ENCODE measurements at regions of chr21 and their contacts with region 1.

Region 1: DNA sequence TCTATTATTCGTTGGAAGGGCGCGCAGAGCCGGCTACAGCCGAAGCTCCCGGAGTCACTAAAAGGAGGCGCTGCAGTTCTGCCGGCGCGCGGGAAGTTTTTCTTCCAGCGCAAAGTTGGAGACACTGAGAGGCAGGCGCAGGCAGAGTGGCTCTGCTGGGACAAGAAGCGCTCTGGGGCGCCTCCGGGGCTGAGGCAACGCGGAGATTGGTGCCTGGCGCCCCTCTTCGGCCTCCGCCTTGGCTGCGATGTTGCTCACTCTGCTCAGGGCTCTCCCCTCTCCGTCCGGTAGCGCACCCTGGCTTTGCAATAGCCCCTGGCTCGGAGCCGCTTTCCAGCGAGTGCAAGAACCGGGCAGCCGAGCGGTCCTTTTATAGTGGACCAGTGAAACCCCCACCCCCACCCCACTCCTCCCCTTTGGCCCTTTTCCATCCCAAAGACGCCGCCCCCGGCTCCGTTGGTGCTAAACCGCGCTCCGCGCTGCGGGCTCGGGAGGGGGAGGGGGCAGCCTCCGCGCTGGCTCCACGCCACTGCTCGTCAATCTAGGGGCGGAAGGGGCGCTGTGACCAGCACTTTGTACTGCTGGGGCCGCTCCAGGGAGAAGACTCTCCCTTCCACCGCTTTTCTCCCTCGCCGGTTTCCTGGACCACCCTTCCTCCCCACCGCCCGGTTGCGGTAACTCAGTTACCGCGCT is at the start of gene ADAMTS1:
- DNase-seq: peak; percentile 42 to 61
- ATAC-seq: peak; percentile 52 to 65 (median 63)
- H3K4me3 ChIP-seq: peak within 1 kb of the TSS; percentile 70
- H3K4me3 Mint-ChIP-seq: peak within 1 kb of the TSS; percentile 91
- H3K27ac ChIP-seq: peak within 1 kb of the TSS; percentile 34
- H3K27ac Mint-ChIP-seq: peak within 1 kb of the TSS; percentile 81 to 91
- H3K4me1 ChIP-seq: peaks cover 38% of the 10 kb centered on the region
- H3K4me1 Mint-ChIP-seq: peaks cover 58 to 71% of the 10 kb centered on the region in 2 donors
- H3K27me3 ChIP-seq: no peaks in the 10 kb centered on the region
- H3K27me3 Mint-ChIP-seq: peaks cover 9 to 15% of the 10 kb centered on the region in 2 donors
- CTCF ChIP-seq: no peak
- total RNA-seq, gene ADAMTS1: 12.5 to 18.7 (median 17.1) TPM

Region 2: DNA sequence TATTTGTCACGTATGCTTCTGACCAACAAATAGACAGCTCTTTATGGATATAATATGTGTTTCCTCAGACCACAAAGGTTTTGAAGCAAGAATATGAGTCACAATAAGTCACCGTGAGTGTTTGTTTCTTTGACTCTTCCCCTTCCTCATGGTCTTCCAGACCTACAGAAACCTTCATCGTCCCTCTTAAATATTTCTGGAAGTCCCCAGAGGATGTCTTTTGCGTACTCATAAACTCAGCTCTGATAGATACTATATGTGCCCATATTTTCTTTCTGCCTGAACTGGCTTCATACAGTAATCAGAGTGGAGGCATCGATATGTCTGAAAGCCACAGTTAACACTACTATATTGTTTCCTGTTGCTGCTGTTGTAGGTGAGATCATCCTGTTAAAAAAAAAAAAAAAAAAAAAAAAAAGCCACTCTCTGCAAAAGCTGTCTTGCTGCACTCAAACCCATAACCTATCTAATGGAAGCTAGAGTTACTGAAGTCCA is 38.4 kb before region 1 on chr21:
- intact Hi-C with region 1: loop called (anchors 2 kb)
- DNase-seq: no peak
- ATAC-seq: peak; percentile 70 to 87 (median 87)
- H3K4me3 ChIP-seq: no peak overlapping the region
- H3K4me3 Mint-ChIP-seq: peak overlapping the region; percentile 76
- H3K27ac ChIP-seq: peak overlapping the region; percentile 6
- H3K27ac Mint-ChIP-seq: peak overlapping the region; percentile 80 to 93
- H3K4me1 ChIP-seq: no peaks in the 10 kb centered on the region
- H3K4me1 Mint-ChIP-seq: peaks cover 16 to 25% of the 10 kb centered on the region in 2 donors
- H3K27me3 ChIP-seq: no peaks in the 10 kb centered on the region
- H3K27me3 Mint-ChIP-seq: peaks cover 0 to 5% of the 10 kb centered on the region in 2 donors
- CTCF ChIP-seq: no peak

Region 3: GRCh38 chr21:27700974-27701614 is 855.9 kb after region 1 on chr21:
- intact Hi-C with region 1: loop called (anchors 1 kb)
- DNase-seq: peak; percentile 64 to 66
- ATAC-seq: peak; percentile 72 to 91 (median 85)
- H3K4me3 ChIP-seq: no peak overlapping the region
- H3K4me3 Mint-ChIP-seq: no peak overlapping the region
- H3K27ac ChIP-seq: no peak overlapping the region
- H3K27ac Mint-ChIP-seq: no peak overlapping the region
- H3K4me1 ChIP-seq: no peaks in the 10 kb centered on the region
- H3K4me1 Mint-ChIP-seq: no peaks in the 10 kb centered on the region
- H3K27me3 ChIP-seq: no peaks in the 10 kb centered on the region
- H3K27me3 Mint-ChIP-seq: peaks cover 0 to 16% of the 10 kb centered on the region in 2 donors
- CTCF ChIP-seq: peak; percentile 80

Region 4: GRCh38 chr21:28745131-28746016 is 1900.2 kb after region 1 on chr21:
- intact Hi-C with region 1: loop called (anchors 1 kb)
- DNase-seq: peak; percentile 51 to 87
- ATAC-seq: peak; percentile 86 to 89 (median 87)
- H3K4me3 ChIP-seq: peak overlapping the region; percentile 24
- H3K4me3 Mint-ChIP-seq: no peak overlapping the region
- H3K27ac ChIP-seq: no peak overlapping the region
- H3K27ac Mint-ChIP-seq: no peak overlapping the region
- H3K4me1 ChIP-seq: peaks cover 5% of the 10 kb centered on the region
- H3K4me1 Mint-ChIP-seq: peaks cover 11 to 24% of the 10 kb centered on the region in 2 donors
- H3K27me3 ChIP-seq: no peaks in the 10 kb centered on the region
- H3K27me3 Mint-ChIP-seq: no peaks in the 10 kb centered on the region
- CTCF ChIP-seq: peak; percentile 83

Region 5: DNA sequence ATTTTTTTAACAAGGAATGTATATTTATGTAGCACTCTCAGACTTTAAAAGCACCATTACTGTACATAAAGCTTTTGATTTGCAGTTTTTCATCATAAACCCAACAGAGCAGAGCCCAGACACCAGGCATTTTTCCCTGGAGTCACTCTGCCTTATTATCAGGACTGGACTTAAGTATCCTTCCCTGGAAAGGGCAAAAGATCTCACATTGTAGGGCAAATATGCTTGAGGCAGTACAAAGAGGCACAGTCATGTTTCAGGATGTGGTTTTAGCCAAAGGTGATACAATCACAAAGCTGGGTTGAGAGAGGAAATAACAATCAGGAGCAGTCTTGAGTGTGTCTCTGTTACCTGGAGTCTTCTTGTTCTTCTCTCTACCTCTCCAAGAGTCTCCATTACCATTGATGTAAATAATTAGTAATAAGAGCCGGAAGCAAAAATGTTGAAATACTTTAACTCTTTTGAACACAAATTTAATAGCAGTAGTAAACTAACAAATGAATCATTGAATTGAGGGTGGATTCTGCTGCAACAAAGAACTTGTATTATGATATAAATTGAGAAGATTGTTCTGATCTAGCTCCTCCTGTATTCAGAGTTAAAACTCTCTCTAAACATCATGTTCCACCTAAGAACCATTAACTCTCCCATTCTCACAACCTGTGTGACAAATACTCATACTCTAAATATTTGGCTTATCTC is 1987.0 kb after region 1 on chr21:
- intact Hi-C with region 1: loop called (anchors 2 kb)
- DNase-seq: peak in 1 of 2 donors; percentile 69
- ATAC-seq: peak; percentile 81 to 92 (median 91)
- H3K4me3 ChIP-seq: no peak overlapping the region
- H3K4me3 Mint-ChIP-seq: peak overlapping the region; percentile 80
- H3K27ac ChIP-seq: peak overlapping the region; percentile 57
- H3K27ac Mint-ChIP-seq: peak overlapping the region; percentile 82 to 86
- H3K4me1 ChIP-seq: peaks cover 34% of the 10 kb centered on the region
- H3K4me1 Mint-ChIP-seq: peaks cover 90 to 93% of the 10 kb centered on the region in 2 donors
- H3K27me3 ChIP-seq: no peaks in the 10 kb centered on the region
- H3K27me3 Mint-ChIP-seq: no peaks in the 10 kb centered on the region
- CTCF ChIP-seq: no peak

Measured in natural killer cell (primary cell).